ENCODE measurements at regions of chr17 and their contacts with region 1.

Region 1: DNA sequence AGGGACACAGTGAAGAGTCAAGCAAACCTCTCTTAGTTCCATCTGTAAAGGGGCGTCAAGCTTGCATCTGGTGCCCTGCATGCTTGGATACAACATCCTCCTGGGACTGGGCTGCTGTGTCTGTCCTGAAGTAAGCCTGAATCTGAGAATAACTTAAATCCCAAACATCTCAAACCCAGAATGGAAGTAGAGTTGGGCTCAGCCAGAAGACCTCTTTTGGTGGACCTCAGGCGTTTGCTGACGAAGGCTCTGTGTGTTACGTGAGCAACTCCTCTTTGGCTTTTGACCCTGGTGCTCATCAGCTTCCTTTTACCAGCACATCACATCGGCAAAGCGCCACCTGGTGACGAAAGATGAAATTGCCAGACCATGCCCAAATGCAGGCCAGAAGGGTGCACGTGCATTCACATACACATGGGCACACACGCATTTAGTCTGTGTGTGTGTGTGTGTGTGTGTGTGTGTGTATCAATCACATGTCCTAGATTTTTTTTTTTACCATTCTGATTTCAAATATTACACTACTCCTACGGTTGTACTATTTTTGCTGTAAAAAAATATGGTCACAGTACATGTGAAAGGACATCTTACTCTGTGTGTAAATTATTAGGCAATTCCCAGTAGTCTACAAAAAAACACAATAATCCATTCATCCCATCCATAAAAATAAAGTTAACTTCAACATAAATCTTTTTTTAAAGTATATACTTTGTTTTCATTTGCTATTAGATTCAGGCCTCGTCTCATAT is 41.1 kb upstream of the FOXJ1 start:
- DNase-seq: peak; percentile 92
- H3K4me3 Mint-ChIP-seq: peak overlapping the region; percentile 30
- H3K27ac Mint-ChIP-seq: peak overlapping the region; percentile 90
- H3K4me1 Mint-ChIP-seq: peaks cover 51% of the 10 kb centered on the region
- H3K27me3 Mint-ChIP-seq: no peaks in the 10 kb centered on the region

Region 2: GRCh38 chr17:76141212-76142038 is 40.8 kb before region 1 on chr17 and contains the start of gene FOXJ1:
- intact Hi-C with region 1: loop called (anchors 5 kb)
- DNase-seq: peak; percentile 90
- H3K4me3 Mint-ChIP-seq: peak within 1 kb of the TSS; percentile 61
- H3K27ac Mint-ChIP-seq: no peak within 1 kb of the TSS
- H3K4me1 Mint-ChIP-seq: peaks cover 45% of the 10 kb centered on the region
- H3K27me3 Mint-ChIP-seq: peaks cover 11% of the 10 kb centered on the region
- total RNA-seq, gene FOXJ1: 0.11 TPM in 2 replicates

Region 3: DNA sequence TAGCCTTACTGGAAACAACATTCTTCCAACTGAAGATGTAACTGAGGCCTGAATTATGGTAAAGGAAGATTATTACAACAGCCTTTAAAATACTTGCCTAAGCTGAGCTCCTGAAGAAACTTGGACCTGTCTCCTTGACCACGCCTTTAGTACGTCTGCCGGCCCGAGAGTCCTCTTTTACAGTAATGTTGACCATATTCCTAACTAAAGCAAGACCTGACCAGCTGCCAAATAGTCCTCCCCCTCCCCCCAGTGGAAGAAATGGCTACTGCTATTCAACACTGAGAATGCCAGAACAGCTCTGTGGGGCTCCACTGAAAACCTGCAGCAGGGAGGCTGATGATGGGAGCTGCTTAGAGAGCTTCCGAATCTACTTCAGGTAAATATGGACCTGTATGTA is 28.6 kb before region 1 on chr17:
- intact Hi-C with region 1: no loop called
- DNase-seq: no peak
- H3K4me3 Mint-ChIP-seq: no peak overlapping the region
- H3K27ac Mint-ChIP-seq: no peak overlapping the region
- H3K4me1 Mint-ChIP-seq: peaks cover 10% of the 10 kb centered on the region
- H3K27me3 Mint-ChIP-seq: no peaks in the 10 kb centered on the region

Measured in activated T-helper 2 cell treated with anti-CD3 and anti-CD28 coated beads, Interferon-gamma antibody, Interleukin-2, Interleukin-4, amounts not matched to agents 10 μg/mL and 5 μg/mL and 100 μg/mL, durations not matched to agents 14 hours and 24 hours and 36 hours (primary cell).